B cell (primary cell): ENCODE measurements at regions of chr14 and their contacts with region 1.

Region 1: DNA sequence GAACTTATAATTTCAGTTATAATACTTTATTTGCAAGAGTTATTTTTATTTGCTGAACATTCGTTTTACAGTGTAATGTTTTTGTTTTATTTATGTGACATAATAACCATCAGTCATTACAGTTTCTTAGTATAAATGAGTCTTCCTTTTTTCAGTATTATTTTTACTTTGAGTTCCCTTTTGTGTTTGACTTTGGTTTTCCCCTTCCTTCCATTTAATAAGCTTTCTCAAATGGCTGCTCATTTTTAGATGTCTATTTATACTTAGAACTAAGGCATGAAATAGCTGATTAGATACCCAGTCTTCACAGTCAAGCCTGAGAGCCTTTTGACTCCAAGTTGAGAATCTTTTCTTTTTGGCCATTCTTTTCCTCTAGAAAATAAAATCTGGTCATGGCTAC is 404.5 kb downstream of the LRFN5 start:
- DNase-seq: no peak
- ATAC-seq: peak; percentile 47
- H3K4me3 ChIP-seq: no peak overlapping the region
- H3K4me3 Mint-ChIP-seq: no peak overlapping the region
- H3K27ac ChIP-seq: peak overlapping the region in 1 of 2 donors; percentile 50
- H3K27ac Mint-ChIP-seq: peak overlapping the region; percentile 66
- H3K4me1 ChIP-seq: peaks cover 0 to 5% of the 10 kb centered on the region in 2 donors
- H3K4me1 Mint-ChIP-seq: peaks cover 27% of the 10 kb centered on the region
- H3K27me3 ChIP-seq: no peaks in the 10 kb centered on the region
- H3K27me3 Mint-ChIP-seq: no peaks in the 10 kb centered on the region
- CTCF ChIP-seq: no peak

Region 2: GRCh38 chr14:41668356-41668755 is 342.9 kb before region 1 on chr14:
- CTCF ChIA-PET with region 1: no interaction called
- POLR2A ChIA-PET with region 1: no interaction called
- intact Hi-C with region 1: no loop called
- DNase-seq: no peak
- ATAC-seq: no peak
- H3K4me3 ChIP-seq: no peak overlapping the region
- H3K4me3 Mint-ChIP-seq: no peak overlapping the region
- H3K27ac ChIP-seq: no peak overlapping the region
- H3K27ac Mint-ChIP-seq: no peak overlapping the region
- H3K4me1 ChIP-seq: no peaks in the 10 kb centered on the region
- H3K4me1 Mint-ChIP-seq: no peaks in the 10 kb centered on the region
- H3K27me3 ChIP-seq: no peaks in the 10 kb centered on the region
- H3K27me3 Mint-ChIP-seq: no peaks in the 10 kb centered on the region
- CTCF ChIP-seq: no peak

Region 3: GRCh38 chr14:42028607-42029006 is 17.4 kb after region 1 on chr14:
- CTCF ChIA-PET with region 1: no interaction called
- POLR2A ChIA-PET with region 1: interaction called, 3 read pairs
- intact Hi-C with region 1: loop called (anchors 2 kb)
- DNase-seq: peak; percentile 44
- ATAC-seq: peak; percentile 78
- H3K4me3 ChIP-seq: peak overlapping the region in 2 of 5 experiments; percentile 4 to 14
- H3K4me3 Mint-ChIP-seq: peak overlapping the region; percentile 55
- H3K27ac ChIP-seq: peak overlapping the region; percentile 20 to 57
- H3K27ac Mint-ChIP-seq: peak overlapping the region; percentile 91
- H3K4me1 ChIP-seq: no peaks in the 10 kb centered on the region
- H3K4me1 Mint-ChIP-seq: peaks cover 24% of the 10 kb centered on the region
- H3K27me3 ChIP-seq: no peaks in the 10 kb centered on the region
- H3K27me3 Mint-ChIP-seq: no peaks in the 10 kb centered on the region
- CTCF ChIP-seq: no peak

Region 4: GRCh38 chr14:42163136-42163535 is 151.9 kb after region 1 on chr14:
- CTCF ChIA-PET with region 1: no interaction called
- POLR2A ChIA-PET with region 1: no interaction called
- intact Hi-C with region 1: no loop called
- DNase-seq: no peak
- ATAC-seq: no peak
- H3K4me3 ChIP-seq: no peak overlapping the region
- H3K4me3 Mint-ChIP-seq: no peak overlapping the region
- H3K27ac ChIP-seq: no peak overlapping the region
- H3K27ac Mint-ChIP-seq: no peak overlapping the region
- H3K4me1 ChIP-seq: no peaks in the 10 kb centered on the region
- H3K4me1 Mint-ChIP-seq: no peaks in the 10 kb centered on the region
- H3K27me3 ChIP-seq: no peaks in the 10 kb centered on the region
- H3K27me3 Mint-ChIP-seq: no peaks in the 10 kb centered on the region
- CTCF ChIP-seq: no peak